ENCODE measurements at regions of chr1 and their contacts with region 1.

Region 1: DNA sequence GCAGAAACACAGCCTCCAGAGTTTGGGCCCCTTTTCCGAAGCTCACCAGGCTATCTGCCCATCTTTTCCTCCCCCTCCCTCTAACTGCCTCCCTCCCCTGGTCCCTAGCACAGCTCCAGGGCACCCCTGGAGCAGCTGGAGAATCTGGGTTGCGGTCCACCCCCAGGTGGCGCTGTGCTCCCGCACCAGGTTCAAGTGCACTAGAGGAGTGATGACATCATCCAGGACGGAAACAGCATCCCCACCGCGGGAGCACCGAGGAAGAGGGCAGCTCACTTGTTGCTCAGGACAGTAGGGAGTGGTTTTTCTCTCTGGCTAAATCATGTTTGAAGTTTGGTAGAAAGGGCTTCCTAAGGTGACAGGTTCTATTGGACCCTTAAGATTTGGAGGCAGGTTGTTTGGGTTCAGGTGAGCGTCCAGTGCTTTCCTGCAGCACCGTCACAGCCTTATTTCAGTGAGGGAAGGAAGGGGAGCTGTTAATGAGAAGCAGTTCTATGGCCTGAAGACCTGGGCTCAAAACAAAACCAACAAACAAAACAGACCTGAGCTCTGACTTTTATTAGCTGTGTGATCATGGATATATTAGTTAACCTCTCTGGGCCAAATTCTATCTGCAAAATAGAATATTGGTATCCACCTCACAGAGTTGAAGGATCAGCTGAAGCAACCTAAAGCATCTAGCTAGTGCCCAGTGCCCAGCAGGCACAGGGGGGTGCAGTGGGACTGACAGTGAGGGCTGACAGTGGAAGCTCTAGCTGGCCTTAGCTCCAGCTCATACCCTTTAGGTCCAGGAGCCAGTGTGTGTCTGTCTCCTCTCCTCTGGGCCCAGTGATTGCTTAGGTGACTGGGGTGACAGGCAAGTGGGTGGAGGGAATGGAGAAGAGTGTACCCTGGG is 7.5 kb downstream of the SHISA4 start:
- DNase-seq: peak; percentile 74 to 93
- H3K4me3 ChIP-seq: no peak overlapping the region
- H3K4me1 ChIP-seq: peaks cover 3% of the 10 kb centered on the region; the same call in 1 of the 2 replicates
- H3K27me3 ChIP-seq: peaks cover 12% of the 10 kb centered on the region; the same call in 1 of the 2 replicates

Region 2: DNA sequence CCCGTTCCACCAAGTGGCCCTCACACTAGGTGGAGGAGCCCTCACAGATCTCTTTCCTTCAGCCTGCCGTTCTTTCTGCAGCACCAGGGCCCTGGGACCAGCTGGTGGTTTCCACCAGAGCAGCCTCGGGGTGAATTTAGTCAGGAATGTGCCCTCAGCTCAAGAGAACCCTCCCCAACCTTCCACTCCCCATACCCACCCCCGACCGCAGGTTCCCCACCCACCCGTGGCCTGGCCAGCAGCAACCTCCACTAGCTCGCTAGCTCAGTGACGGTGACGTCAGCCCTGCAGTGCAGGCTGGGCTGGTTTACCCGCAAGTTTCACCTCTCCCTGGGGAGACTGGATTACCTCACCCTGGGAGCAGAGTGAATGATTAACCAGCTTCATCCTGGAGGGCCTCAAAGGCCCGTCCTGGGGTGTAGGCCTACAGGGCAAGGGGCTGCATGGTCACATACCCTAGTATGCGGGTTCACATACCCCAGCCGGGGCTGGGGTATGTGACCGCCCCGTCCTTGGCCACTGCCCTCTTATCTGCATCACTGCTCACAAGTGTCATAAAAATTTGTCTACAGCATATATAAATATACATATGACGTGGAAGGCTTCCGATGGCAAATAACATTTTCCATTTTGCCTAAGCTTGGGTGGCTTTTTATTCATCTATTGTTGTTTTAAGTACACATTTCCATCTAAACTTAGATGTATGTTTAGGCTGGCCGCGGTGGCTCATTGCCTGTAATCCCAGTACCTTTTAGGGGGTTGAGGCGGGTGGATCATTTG is 138.7 kb after region 1 on chr1:
- in situ Hi-C with region 1: no loop called
- DNase-seq: peak in 1 of 2 experiments; percentile 52
- H3K4me3 ChIP-seq: no peak overlapping the region
- H3K4me1 ChIP-seq: no peaks in the 10 kb centered on the region
- H3K27me3 ChIP-seq: no peaks in the 10 kb centered on the region

Region 3: GRCh38 chr1:202112839-202113672 is 216.9 kb after region 1 on chr1:
- in situ Hi-C with region 1: loop called (anchors 10 kb)
- DNase-seq: no peak
- H3K4me3 ChIP-seq: no peak overlapping the region
- H3K4me1 ChIP-seq: no peaks in the 10 kb centered on the region
- H3K27me3 ChIP-seq: no peaks in the 10 kb centered on the region